Activated naive CD8-positive, alpha-beta T cell treated with anti-CD3 and anti-CD28 coated beads, Interleukin-2, amount 10 ng/mL, durations not matched to agents 7 days and 5 days (primary cell): ENCODE measurements at regions of chr4 and their contacts with region 1.

Region 1: GRCh38 chr4:81471588-81472288 is at the start of gene RASGEF1B:
- DNase-seq: peak; percentile 95
- ATAC-seq: peak; percentile 91
- H3K4me3 Mint-ChIP-seq: peak within 1 kb of the TSS; percentile 95
- H3K27ac Mint-ChIP-seq: peak within 1 kb of the TSS; percentile 93
- H3K4me1 Mint-ChIP-seq: peaks cover 34% of the 10 kb centered on the region
- H3K27me3 Mint-ChIP-seq: no peaks in the 10 kb centered on the region
- total RNA-seq, gene RASGEF1B: 8.0 to 8.2 TPM

Region 2: DNA sequence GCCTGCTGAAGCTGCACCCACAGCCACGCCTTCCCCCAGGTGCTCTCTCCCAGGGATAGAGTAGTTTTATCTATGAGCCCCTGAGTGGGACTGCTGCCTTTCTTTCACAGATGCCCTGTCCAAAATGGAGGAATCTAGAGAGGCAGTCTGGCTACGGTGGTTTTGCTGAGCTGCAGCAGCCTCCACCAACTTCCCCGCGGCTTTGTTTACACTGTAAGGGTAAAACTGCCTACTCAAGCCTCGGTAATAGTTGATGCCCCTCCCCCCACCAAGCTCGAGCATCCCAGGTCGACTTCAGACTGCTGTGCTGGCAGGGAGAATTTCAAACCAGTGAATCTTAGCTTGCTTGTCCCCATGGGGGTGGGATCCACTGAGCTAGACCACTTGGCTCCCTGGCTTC is 341.2 kb before region 1 on chr4:
- POLR2A ChIA-PET with region 1: no interaction called
- DNase-seq: no peak
- ATAC-seq: no peak
- H3K4me3 Mint-ChIP-seq: no peak overlapping the region
- H3K27ac Mint-ChIP-seq: no peak overlapping the region
- H3K4me1 Mint-ChIP-seq: no peaks in the 10 kb centered on the region
- H3K27me3 Mint-ChIP-seq: no peaks in the 10 kb centered on the region

Region 3: GRCh38 chr4:81392164-81392563 is 79.6 kb before region 1 on chr4:
- POLR2A ChIA-PET with region 1: no interaction called
- DNase-seq: no peak
- ATAC-seq: no peak
- H3K4me3 Mint-ChIP-seq: no peak overlapping the region
- H3K27ac Mint-ChIP-seq: no peak overlapping the region
- H3K4me1 Mint-ChIP-seq: peaks cover 3% of the 10 kb centered on the region
- H3K27me3 Mint-ChIP-seq: no peaks in the 10 kb centered on the region

Region 4: DNA sequence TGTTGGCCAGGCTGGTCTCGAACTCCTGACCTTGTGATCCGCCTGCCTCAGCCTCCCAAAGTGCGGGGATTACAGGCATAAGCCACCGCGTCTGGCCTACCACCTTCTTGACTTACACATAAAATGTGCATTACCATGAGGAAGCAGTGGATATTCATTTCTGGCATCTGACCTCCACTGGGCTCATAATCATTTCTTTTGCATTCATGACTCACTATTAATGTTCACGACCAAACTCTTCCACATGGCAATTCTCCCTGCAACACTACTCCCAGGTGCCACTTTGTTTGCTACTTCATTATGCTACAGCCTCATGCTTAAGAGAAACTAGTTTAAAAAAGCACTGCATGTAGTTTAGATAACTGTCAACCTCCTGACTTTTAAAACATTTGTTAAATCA is 22.7 kb before region 1 on chr4:
- POLR2A ChIA-PET with region 1: no interaction called
- DNase-seq: no peak
- ATAC-seq: no peak
- H3K4me3 Mint-ChIP-seq: no peak overlapping the region
- H3K27ac Mint-ChIP-seq: peak overlapping the region; percentile 9
- H3K4me1 Mint-ChIP-seq: no peaks in the 10 kb centered on the region
- H3K27me3 Mint-ChIP-seq: no peaks in the 10 kb centered on the region

Region 5: GRCh38 chr4:81494031-81494431 is 22.3 kb after region 1 on chr4:
- POLR2A ChIA-PET with region 1: interaction called, 55 read pairs
- DNase-seq: no peak
- ATAC-seq: peak; percentile 42
- H3K4me3 Mint-ChIP-seq: peak overlapping the region; percentile 73
- H3K27ac Mint-ChIP-seq: peak overlapping the region; percentile 85
- H3K4me1 Mint-ChIP-seq: peaks cover 38% of the 10 kb centered on the region
- H3K27me3 Mint-ChIP-seq: no peaks in the 10 kb centered on the region

Region 6: DNA sequence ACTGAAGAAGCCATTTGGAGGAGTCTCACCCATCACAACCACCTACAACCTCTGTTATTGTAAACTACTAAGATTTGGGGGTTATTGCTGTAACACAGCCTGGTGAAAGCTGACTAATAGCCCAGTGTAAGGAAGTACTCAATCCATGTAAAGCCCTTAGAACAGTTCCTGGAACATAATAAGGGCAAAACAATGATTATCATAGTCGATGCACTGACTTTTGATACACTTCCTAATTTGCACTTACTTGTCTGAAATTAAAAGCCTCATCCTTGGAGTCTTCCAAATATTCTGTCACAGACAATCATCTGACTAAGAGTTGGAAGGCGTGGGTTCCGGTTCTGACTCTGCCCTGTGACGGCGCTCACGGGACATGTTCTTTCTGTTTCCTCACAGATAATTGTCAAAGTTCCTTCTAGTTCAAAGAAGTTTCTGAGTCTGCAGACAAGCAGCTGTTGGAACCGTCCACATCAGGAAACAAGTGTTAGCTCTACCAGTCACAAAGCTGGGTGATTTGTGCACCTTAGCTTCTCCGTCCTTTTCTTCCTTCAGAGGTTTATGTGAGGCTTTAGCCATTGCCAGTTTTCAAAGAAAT is 33.4 kb after region 1 on chr4:
- POLR2A ChIA-PET with region 1: interaction called, 21 read pairs
- DNase-seq: peak; percentile 53
- ATAC-seq: peak; percentile 88
- H3K4me3 Mint-ChIP-seq: peak overlapping the region; percentile 73
- H3K27ac Mint-ChIP-seq: peak overlapping the region; percentile 83
- H3K4me1 Mint-ChIP-seq: peaks cover 38% of the 10 kb centered on the region
- H3K27me3 Mint-ChIP-seq: no peaks in the 10 kb centered on the region